Left ventricle myocardium inferior (tissue), 1 donor: ENCODE measurements at regions of chr3 and their contacts with region 1.

Region 1: DNA sequence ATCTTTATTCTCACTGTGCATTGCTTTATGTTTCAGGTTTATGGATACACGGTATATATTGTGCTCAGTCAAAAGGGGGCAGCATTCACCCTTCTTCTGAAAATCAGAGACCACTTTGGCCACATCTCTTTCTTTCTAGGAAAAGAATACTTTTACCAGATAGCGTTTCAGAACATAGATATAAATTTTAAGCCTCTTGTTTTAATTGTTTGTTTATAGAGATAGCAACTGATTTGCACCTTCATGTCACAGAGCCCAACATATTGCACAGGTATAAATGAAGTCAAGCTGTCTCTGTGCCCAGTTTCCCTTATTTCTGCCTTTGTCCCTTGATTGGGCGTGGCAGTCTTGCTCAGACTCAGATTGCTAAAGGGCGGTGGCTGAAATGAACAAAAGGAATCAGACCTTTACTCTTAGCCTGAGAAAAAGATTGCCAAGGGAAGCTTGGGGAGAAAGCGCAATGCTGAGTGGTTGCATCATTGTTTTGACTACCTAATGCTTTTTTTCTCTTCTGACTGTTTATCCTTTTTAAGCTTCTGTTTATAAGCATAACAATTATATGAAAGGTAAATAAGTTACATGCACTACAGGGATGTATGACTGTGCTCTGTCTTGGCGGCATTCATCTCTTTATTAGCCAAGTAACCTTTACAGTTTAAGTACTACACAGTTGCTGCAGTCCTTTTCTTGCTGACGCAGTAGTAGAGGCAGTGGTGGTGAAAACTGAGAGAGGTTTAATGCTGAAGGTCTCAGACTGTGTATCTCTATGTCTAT is 70.8 kb upstream of the ZBTB20 start:
- DNase-seq: no peak
- H3K4me3 ChIP-seq: no peak overlapping the region
- H3K27ac ChIP-seq: no peak overlapping the region
- H3K4me1 ChIP-seq: peaks cover 25% of the 10 kb centered on the region
- H3K27me3 ChIP-seq: no peaks in the 10 kb centered on the region
- CTCF ChIP-seq: peak; percentile 82

Region 2: GRCh38 chr3:115692887-115693524 is 475.1 kb after region 1 on chr3:
- intact Hi-C with region 1: loop called (anchors 5 kb)
- DNase-seq: peak; percentile 52
- H3K4me3 ChIP-seq: no peak overlapping the region
- H3K27ac ChIP-seq: no peak overlapping the region
- H3K4me1 ChIP-seq: no peaks in the 10 kb centered on the region
- H3K27me3 ChIP-seq: no peaks in the 10 kb centered on the region
- CTCF ChIP-seq: peak; percentile 90

Region 3: DNA sequence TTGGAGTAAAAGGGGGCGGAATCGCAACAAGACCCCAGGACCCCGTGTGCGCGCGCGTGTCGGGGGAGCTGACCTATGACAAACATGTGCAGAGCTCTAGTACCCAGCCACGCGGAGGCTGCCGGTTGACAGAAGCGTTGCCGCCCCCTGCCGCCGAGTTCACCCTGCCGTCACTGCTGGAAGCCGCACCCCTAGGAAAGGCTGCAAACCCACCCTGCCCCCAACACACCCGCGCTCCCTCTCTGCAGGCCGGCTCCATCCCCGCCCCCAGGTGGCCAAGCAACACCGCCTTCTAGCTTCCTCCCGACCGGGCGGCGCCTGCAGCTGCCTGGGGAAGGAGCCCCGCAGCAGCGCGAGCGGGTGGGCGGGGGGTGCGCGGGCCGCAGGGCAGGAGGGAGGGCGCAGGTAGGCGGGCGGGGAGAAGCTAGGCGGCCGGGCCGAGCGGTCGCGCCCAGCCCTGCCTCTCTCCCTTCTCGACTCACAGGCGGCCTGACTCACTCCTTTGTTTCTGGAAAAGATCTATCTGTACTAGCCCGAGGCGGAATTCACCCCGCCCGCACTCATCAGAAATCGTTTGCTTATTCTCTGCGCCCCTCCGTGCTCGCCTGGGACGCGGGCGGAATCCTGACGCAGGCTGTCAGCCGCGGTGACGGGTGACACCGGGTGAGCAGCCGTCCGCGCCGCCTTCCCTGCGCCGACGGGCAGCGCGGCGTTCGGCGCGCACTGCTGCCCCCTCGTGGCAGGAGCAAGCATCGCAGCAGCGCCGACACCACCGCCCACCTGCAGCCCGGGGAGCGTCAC is 566.3 kb after region 1 on chr3:
- intact Hi-C with region 1: loop called (anchors 10 kb)
- DNase-seq: peak; percentile 92
- H3K4me3 ChIP-seq: peak overlapping the region; percentile 87
- H3K27ac ChIP-seq: peak overlapping the region; percentile 98
- H3K4me1 ChIP-seq: peaks cover 20% of the 10 kb centered on the region
- H3K27me3 ChIP-seq: no peaks in the 10 kb centered on the region
- CTCF ChIP-seq: peak; percentile 98